ENCODE measurements at regions of chr14 and their contacts with region 1.

Region 1: DNA sequence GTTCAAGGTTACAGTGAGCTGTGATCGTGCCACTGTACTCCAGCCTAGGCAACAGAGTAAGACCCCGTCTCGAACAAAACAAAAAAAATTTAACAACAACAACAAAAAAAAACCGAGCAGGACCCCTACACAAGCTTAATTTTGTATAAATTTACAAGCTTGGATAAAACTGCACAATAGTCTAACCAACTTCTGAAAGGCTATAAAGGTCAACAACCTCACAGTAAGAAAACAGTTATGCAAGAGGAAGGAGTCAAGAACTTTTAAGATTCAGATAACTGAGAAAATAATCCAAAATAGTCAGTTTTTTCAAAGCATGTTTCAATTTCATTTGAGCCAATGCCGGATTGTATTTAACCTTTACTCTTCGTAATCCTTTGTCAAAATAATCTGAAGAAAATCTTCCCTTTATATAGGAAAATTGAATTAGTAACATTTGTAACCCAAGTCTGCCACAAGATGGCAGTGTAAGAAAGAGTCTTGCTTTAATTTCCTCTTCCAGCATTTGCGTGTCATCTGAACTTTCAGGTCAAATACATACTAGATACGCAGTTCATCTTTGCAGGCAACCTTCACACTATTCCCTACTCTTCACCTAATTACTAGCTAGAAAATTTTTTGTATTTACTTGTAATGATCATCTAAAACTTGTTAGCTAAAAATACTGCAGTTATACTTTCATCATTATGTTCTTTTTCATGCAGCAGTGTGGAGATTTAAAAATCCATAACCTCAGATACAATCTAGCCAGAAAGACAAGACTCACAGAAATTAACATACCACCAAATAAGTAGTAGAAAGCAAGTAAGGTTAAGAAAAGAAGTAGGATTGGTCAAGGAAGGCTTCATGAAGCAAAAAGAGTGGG is 5.8 kb downstream of the CCNB1IP1 start:
- DNase-seq: peak in 5 of 14 experiments; percentile 14 to 84 (median 79)
- ATAC-seq: peak; percentile 72
- H3K4me3 ChIP-seq: no peak overlapping the region
- H3K4me3 Mint-ChIP-seq: peak overlapping the region; percentile 31
- H3K27ac ChIP-seq: peak overlapping the region in 1 of 2 donors; percentile 35
- H3K27ac Mint-ChIP-seq: peak overlapping the region; percentile 80
- H3K4me1 ChIP-seq: no peaks in the 10 kb centered on the region
- H3K4me1 Mint-ChIP-seq: peaks cover 30% of the 10 kb centered on the region
- H3K27me3 ChIP-seq: no peaks in the 10 kb centered on the region
- H3K27me3 Mint-ChIP-seq: no peaks in the 10 kb centered on the region
- CTCF ChIP-seq: peak; percentile 87

Region 2: GRCh38 chr14:20343092-20343861 is 16.0 kb after region 1 on chr14 and contains the start of gene PARP2:
- CTCF ChIA-PET with region 1: interaction called, 34 read pairs
- POLR2A ChIA-PET with region 1: interaction called, 38 read pairs
- intact Hi-C with region 1: loop called (anchors 1 to 2 kb)
- DNase-seq: peak; percentile 70 to 97 (median 82)
- ATAC-seq: peak; percentile 81
- H3K4me3 ChIP-seq: peak within 1 kb of the TSS; percentile 83
- H3K4me3 Mint-ChIP-seq: peak within 1 kb of the TSS; percentile 99
- H3K27ac ChIP-seq: peak within 1 kb of the TSS; percentile 92 to 95
- H3K27ac Mint-ChIP-seq: peak within 1 kb of the TSS; percentile 97
- H3K4me1 ChIP-seq: no peaks in the 10 kb centered on the region
- H3K4me1 Mint-ChIP-seq: peaks cover 11% of the 10 kb centered on the region
- H3K27me3 ChIP-seq: no peaks in the 10 kb centered on the region
- H3K27me3 Mint-ChIP-seq: no peaks in the 10 kb centered on the region
- CTCF ChIP-seq: no peak
- total RNA-seq, gene PARP2: 16.3 to 20.4 TPM

Region 3: GRCh38 chr14:20350282-20350681 is 23.0 kb after region 1 on chr14:
- CTCF ChIA-PET with region 1: interaction called, 11 read pairs
- POLR2A ChIA-PET with region 1: interaction called, 3 read pairs
- intact Hi-C with region 1: no loop called
- DNase-seq: no peak
- ATAC-seq: no peak
- H3K4me3 ChIP-seq: no peak overlapping the region
- H3K4me3 Mint-ChIP-seq: no peak overlapping the region
- H3K27ac ChIP-seq: no peak overlapping the region
- H3K27ac Mint-ChIP-seq: no peak overlapping the region
- H3K4me1 ChIP-seq: no peaks in the 10 kb centered on the region
- H3K4me1 Mint-ChIP-seq: no peaks in the 10 kb centered on the region
- H3K27me3 ChIP-seq: no peaks in the 10 kb centered on the region
- H3K27me3 Mint-ChIP-seq: no peaks in the 10 kb centered on the region
- CTCF ChIP-seq: no peak

Region 4: GRCh38 chr14:20413045-20413799 is 86.0 kb after region 1 on chr14 and contains the start of gene TEP1:
- CTCF ChIA-PET with region 1: interaction called, 7 read pairs
- POLR2A ChIA-PET with region 1: no interaction called
- intact Hi-C with region 1: loop called in 1 of 2 experiments (anchors 2 kb)
- DNase-seq: peak; percentile 47 to 81 (median 66)
- ATAC-seq: peak; percentile 72
- H3K4me3 ChIP-seq: peak within 1 kb of the TSS; percentile 96
- H3K4me3 Mint-ChIP-seq: peak within 1 kb of the TSS; percentile 98
- H3K27ac ChIP-seq: peak within 1 kb of the TSS; percentile 80 to 90
- H3K27ac Mint-ChIP-seq: peak within 1 kb of the TSS; percentile 80
- H3K4me1 ChIP-seq: peaks cover 19% of the 10 kb centered on the region
- H3K4me1 Mint-ChIP-seq: peaks cover 49% of the 10 kb centered on the region
- H3K27me3 ChIP-seq: no peaks in the 10 kb centered on the region
- H3K27me3 Mint-ChIP-seq: no peaks in the 10 kb centered on the region
- CTCF ChIP-seq: no peak
- total RNA-seq, gene TEP1: 14.3 to 17.4 TPM

Region 5: DNA sequence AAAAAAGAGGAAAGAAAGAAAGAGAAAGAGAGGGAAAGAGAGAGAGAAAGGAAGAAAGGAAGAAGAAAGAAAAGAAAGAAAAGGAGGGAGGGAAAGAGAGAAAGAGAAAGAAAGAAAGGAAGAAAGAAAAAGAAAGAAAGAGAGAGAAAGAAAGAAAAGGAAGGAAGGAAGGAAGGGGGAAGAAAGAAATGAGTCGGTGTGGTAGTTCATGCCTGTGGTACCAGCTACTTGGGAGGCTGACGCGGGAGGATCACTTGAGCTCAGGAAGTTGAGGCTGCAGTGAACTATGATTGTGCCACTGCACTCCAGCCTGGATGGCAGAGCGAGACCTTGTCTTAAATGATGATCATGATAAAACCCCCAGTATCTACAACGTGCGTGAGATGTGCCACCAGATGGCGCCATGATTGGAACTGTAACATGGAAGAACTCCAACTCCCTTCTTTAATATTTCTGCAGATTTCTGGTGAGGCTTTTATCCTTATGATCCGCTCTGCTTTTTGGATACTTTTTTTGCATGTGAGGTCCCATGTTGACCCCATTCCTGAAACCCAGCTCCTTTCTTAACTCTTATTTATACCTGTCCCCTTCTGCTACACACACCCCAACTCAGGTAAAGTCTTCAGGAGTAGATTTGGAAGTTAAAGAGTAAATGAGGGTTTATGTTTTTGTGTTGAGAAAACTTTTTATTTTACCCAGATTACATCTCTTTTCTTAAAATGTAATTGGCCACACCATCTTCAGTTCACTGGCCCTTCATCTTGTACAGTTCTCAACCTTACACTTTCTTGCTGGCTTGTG is 203.7 kb after region 1 on chr14:
- CTCF ChIA-PET with region 1: no interaction called
- POLR2A ChIA-PET with region 1: no interaction called
- intact Hi-C with region 1: loop called in 1 of 2 experiments (anchors 5 kb)
- DNase-seq: peak; percentile 51 to 86 (median 64)
- ATAC-seq: peak; percentile 67
- H3K4me3 ChIP-seq: no peak overlapping the region
- H3K4me3 Mint-ChIP-seq: no peak overlapping the region
- H3K27ac ChIP-seq: no peak overlapping the region
- H3K27ac Mint-ChIP-seq: no peak overlapping the region
- H3K4me1 ChIP-seq: peaks cover 3% of the 10 kb centered on the region
- H3K4me1 Mint-ChIP-seq: peaks cover 7% of the 10 kb centered on the region
- H3K27me3 ChIP-seq: no peaks in the 10 kb centered on the region
- H3K27me3 Mint-ChIP-seq: peaks cover 5% of the 10 kb centered on the region
- CTCF ChIP-seq: peak; percentile 70

Region 6: DNA sequence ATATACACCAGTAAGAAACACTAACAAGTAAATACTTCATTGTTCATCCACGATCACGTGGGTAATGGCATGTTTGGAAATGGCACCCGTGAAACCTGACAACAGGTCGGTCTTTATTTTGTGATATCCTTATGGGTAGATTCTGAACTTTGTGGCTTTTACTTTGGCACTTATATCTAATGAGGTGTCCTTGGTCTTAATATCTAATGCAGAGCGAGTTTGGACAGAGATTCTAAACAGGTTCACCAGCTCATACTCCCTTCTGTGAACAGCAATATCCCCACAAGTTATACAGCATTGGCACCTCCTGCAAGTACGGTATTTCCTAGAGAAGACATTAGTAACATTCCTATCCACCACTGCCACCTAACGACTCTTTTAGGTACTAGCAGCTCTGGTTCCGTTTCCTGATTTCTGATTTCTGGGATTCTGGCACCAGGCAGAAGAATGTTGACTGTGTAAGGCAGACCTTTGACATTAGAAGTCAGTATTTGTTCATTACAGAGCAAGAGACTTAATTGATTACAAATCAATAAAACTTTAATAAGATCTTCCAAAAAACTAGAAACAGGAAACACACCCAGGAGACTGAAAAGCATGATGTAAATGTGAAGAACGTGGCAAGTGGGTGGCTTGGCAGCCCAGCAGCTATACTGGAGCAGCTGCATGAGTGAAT is 363.7 kb after region 1 on chr14:
- CTCF ChIA-PET with region 1: interaction called, 10 read pairs
- POLR2A ChIA-PET with region 1: no interaction called
- intact Hi-C with region 1: loop called (anchors 1 kb)
- DNase-seq: peak in 10 of 14 experiments; percentile 7 to 85 (median 30)
- ATAC-seq: peak; percentile 99
- H3K4me3 ChIP-seq: no peak overlapping the region
- H3K4me3 Mint-ChIP-seq: no peak overlapping the region
- H3K27ac ChIP-seq: no peak overlapping the region
- H3K27ac Mint-ChIP-seq: no peak overlapping the region
- H3K4me1 ChIP-seq: no peaks in the 10 kb centered on the region
- H3K4me1 Mint-ChIP-seq: peaks cover 6% of the 10 kb centered on the region
- H3K27me3 ChIP-seq: no peaks in the 10 kb centered on the region
- H3K27me3 Mint-ChIP-seq: no peaks in the 10 kb centered on the region
- CTCF ChIP-seq: peak; percentile 93

Region 7: GRCh38 chr14:20873370-20874177 is 546.3 kb after region 1 on chr14:
- CTCF ChIA-PET with region 1: interaction called, 3 read pairs
- POLR2A ChIA-PET with region 1: no interaction called
- intact Hi-C with region 1: loop called in 1 of 2 experiments (anchors 10 kb)
- DNase-seq: peak; percentile 57 to 85 (median 70)
- ATAC-seq: peak; percentile 71
- H3K4me3 ChIP-seq: no peak overlapping the region
- H3K4me3 Mint-ChIP-seq: no peak overlapping the region
- H3K27ac ChIP-seq: no peak overlapping the region
- H3K27ac Mint-ChIP-seq: no peak overlapping the region
- H3K4me1 ChIP-seq: peaks cover 10% of the 10 kb centered on the region
- H3K4me1 Mint-ChIP-seq: peaks cover 15% of the 10 kb centered on the region
- H3K27me3 ChIP-seq: peaks cover 0 to 6% of the 10 kb centered on the region in 2 experiments
- H3K27me3 Mint-ChIP-seq: peaks cover 4% of the 10 kb centered on the region
- CTCF ChIP-seq: peak; percentile 76